CD8-positive, alpha-beta T cell (primary cell): ENCODE measurements at regions of chr13 and their contacts with region 1.

Region 1: DNA sequence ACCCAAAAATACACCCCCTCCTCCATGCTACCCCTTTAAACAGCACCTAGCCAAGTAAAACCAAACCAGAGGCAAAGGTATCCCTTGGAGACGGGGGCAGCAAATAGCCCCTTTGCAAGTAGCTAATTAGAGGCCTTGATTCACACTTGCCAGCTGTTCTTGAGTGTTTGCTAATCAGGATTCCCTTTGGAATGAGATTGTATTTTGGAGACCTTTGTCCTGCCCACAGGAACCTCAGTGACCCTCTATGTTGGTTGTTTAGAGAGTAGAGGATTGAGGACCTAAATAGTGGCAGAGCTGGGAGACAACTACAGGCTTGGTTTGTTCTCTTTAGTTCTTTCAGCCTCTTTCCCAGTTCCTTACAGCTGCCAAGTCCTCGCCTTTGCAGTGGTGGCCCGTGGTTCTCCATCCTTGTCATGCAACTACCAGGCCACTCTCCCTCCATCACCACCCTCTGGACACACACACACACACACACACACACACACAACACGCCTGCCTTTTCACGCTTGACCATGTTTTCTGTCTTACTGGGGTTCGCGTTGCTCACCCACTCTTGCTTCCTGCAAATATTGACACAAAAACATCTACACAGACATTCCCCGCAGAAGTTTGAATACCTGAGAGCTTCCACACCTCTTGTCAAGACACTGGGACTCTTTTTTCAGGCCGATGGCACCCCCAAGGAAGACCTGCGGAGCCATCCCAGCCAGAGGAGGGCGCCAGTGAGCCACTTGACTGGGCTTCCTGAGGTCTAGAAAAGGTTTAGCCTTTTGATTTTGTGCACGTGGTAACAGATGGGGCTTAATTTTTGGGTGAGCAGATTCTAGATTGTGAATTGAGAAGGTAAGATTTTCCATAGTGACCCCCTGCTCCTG is 80.0 kb upstream of the GPR183 start:
- DNase-seq: peak; percentile 77 to 95 (median 87)
- ATAC-seq: peak; percentile 21
- H3K4me3 ChIP-seq: no peak overlapping the region
- H3K4me3 Mint-ChIP-seq: peak overlapping the region; percentile 27
- H3K27ac ChIP-seq: peak overlapping the region in 1 of 2 experiments; percentile 51
- H3K27ac Mint-ChIP-seq: peak overlapping the region; percentile 98
- H3K4me1 ChIP-seq: peaks cover 65% of the 10 kb centered on the region
- H3K4me1 Mint-ChIP-seq: peaks cover 71% of the 10 kb centered on the region
- H3K27me3 ChIP-seq: no peaks in the 10 kb centered on the region
- H3K27me3 Mint-ChIP-seq: no peaks in the 10 kb centered on the region
- CTCF ChIP-seq: peak; percentile 95

Region 2: GRCh38 chr13:99275093-99275469 is 112.1 kb before region 1 on chr13:
- CTCF ChIA-PET with region 1: interaction called, 170 read pairs
- POLR2A ChIA-PET with region 1: interaction called, 9 read pairs
- intact Hi-C with region 1: no loop called
- DNase-seq: peak in 8 of 9 experiments; percentile 22 to 83 (median 56)
- ATAC-seq: peak; percentile 63
- H3K4me3 ChIP-seq: no peak overlapping the region
- H3K4me3 Mint-ChIP-seq: peak overlapping the region; percentile 23
- H3K27ac ChIP-seq: peak overlapping the region in 1 of 2 experiments; percentile 34
- H3K27ac Mint-ChIP-seq: peak overlapping the region; percentile 86
- H3K4me1 ChIP-seq: peaks cover 86% of the 10 kb centered on the region
- H3K4me1 Mint-ChIP-seq: peaks cover 93% of the 10 kb centered on the region
- H3K27me3 ChIP-seq: no peaks in the 10 kb centered on the region
- H3K27me3 Mint-ChIP-seq: no peaks in the 10 kb centered on the region
- CTCF ChIP-seq: no peak

Region 3: GRCh38 chr13:99331881-99332293 is 55.3 kb before region 1 on chr13:
- CTCF ChIA-PET with region 1: interaction called, 14 read pairs
- POLR2A ChIA-PET with region 1: interaction called, 3 read pairs
- intact Hi-C with region 1: no loop called
- DNase-seq: no peak
- ATAC-seq: no peak
- H3K4me3 ChIP-seq: no peak overlapping the region
- H3K4me3 Mint-ChIP-seq: no peak overlapping the region
- H3K27ac ChIP-seq: no peak overlapping the region
- H3K27ac Mint-ChIP-seq: peak overlapping the region; percentile 56
- H3K4me1 ChIP-seq: peaks cover 11% of the 10 kb centered on the region
- H3K4me1 Mint-ChIP-seq: peaks cover 48% of the 10 kb centered on the region
- H3K27me3 ChIP-seq: no peaks in the 10 kb centered on the region
- H3K27me3 Mint-ChIP-seq: no peaks in the 10 kb centered on the region
- CTCF ChIP-seq: no peak

Region 4: GRCh38 chr13:99374994-99375737 is 12.0 kb before region 1 on chr13:
- CTCF ChIA-PET with region 1: interaction called, 50 read pairs
- POLR2A ChIA-PET with region 1: interaction called, 22 read pairs
- intact Hi-C with region 1: loop called in 1 of 2 experiments (anchors 1 kb)
- DNase-seq: peak in 8 of 9 experiments; percentile 60 to 91 (median 80)
- ATAC-seq: peak; percentile 89
- H3K4me3 ChIP-seq: peak overlapping the region in 1 of 2 experiments; percentile 18
- H3K4me3 Mint-ChIP-seq: peak overlapping the region; percentile 61
- H3K27ac ChIP-seq: peak overlapping the region; percentile 55 to 85
- H3K27ac Mint-ChIP-seq: peak overlapping the region; percentile 97
- H3K4me1 ChIP-seq: peaks cover 75% of the 10 kb centered on the region
- H3K4me1 Mint-ChIP-seq: peaks cover 92% of the 10 kb centered on the region
- H3K27me3 ChIP-seq: no peaks in the 10 kb centered on the region
- H3K27me3 Mint-ChIP-seq: no peaks in the 10 kb centered on the region
- CTCF ChIP-seq: no peak

Region 5: DNA sequence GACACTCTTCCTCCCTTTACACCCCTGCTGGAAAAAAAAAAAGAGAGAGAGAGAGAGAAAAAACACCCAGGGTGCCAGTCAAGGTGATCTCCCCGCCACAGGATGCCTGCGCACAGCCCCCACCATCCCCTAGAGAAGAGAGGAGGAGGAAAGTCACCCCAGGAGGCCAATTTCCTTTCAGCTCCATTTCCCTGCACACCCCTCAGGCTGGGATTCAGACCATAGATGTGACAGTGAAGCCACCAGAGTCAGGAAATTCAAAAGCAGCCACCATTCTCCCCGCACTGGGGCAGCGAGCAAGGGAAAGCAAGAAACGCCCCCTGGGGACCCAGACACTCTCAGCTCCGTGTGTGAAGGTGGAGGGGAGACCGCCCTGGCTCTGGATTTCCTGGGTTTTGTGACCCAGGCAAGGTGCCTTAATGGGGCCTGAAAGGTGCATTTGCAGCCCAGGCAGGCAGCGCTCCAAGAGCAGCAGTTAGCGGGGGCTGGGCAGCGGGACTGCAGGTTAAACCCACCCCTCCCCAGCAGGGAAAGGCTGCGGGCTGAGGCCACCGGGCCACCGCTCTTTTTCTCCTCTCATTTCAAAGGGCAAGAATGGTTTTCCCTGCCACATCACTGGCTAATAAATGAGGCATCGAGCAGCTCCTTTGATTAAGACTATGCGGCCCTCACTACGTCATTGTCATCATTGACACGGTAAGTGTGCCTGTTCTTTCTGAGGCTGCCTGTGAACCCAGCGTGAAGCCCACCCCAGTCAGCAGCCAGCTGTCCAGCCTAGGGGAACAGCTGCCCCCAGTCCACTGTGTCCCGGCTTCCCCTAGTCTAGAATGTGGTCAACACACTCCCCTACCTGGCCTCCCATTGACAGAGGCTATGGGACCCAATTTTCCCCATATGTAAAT is 30.3 kb after region 1 on chr13:
- CTCF ChIA-PET with region 1: interaction called, 36 read pairs
- POLR2A ChIA-PET with region 1: interaction called, 7 read pairs
- intact Hi-C with region 1: loop called in 1 of 2 experiments (anchors 1 kb)
- DNase-seq: peak in 4 of 9 experiments; percentile 43 to 77 (median 64)
- ATAC-seq: peak; percentile 36
- H3K4me3 ChIP-seq: peak overlapping the region; percentile 35 to 57
- H3K4me3 Mint-ChIP-seq: no peak overlapping the region
- H3K27ac ChIP-seq: peak overlapping the region; percentile 43 to 60
- H3K27ac Mint-ChIP-seq: no peak overlapping the region
- H3K4me1 ChIP-seq: peaks cover 96% of the 10 kb centered on the region
- H3K4me1 Mint-ChIP-seq: peaks cover 63% of the 10 kb centered on the region
- H3K27me3 ChIP-seq: no peaks in the 10 kb centered on the region
- H3K27me3 Mint-ChIP-seq: no peaks in the 10 kb centered on the region
- CTCF ChIP-seq: no peak